K562 (cell line): ENCODE measurements at regions of chr1 and their contacts with region 1.

Region 1: GRCh38 chr1:158998781-158999161 is 10.9 kb upstream of the IFI16 start:
- DNase-seq: peak; percentile 47 to 73 (median 52)
- ATAC-seq: peak; percentile 83
- H3K4me3 ChIP-seq: no peak overlapping the region
- H3K27ac ChIP-seq: no peak overlapping the region
- H3K4me1 ChIP-seq: no peaks in the 10 kb centered on the region; a peak in 1 of 5 replicates
- H3K27me3 ChIP-seq: no peaks in the 10 kb centered on the region
- CTCF ChIP-seq: peak; percentile 57 to 91 (median 76); a peak in 5 of 6 replicates
- EP300 ChIP-seq: no peak
- POLR2A ChIP-seq: no peak
- RAD21 ChIP-seq: peak; percentile 90 to 94

Region 2: GRCh38 chr1:158203693-158204457 is 794.9 kb before region 1 on chr1:
- CTCF ChIA-PET with region 1: interaction called, 3 read pairs
- POLR2A ChIA-PET with region 1: no interaction called
- in situ Hi-C with region 1: no loop called
- intact Hi-C with region 1: loop called (anchors 5 kb)
- DNase-seq: peak; percentile 31 to 71 (median 40)
- ATAC-seq: peak; percentile 97
- H3K4me3 ChIP-seq: no peak overlapping the region
- H3K27ac ChIP-seq: no peak overlapping the region
- H3K4me1 ChIP-seq: no peaks in the 10 kb centered on the region; a peak in 1 of 5 replicates
- H3K27me3 ChIP-seq: no peaks in the 10 kb centered on the region
- CTCF ChIP-seq: peak; percentile 36 to 73 (median 70); a peak in 5 of 6 replicates
- EP300 ChIP-seq: no peak
- POLR2A ChIP-seq: no peak
- RAD21 ChIP-seq: peak; percentile 73 to 77

Region 3: GRCh38 chr1:158417586-158417985 is 581.2 kb before region 1 on chr1:
- CTCF ChIA-PET with region 1: no interaction called
- POLR2A ChIA-PET with region 1: no interaction called
- in situ Hi-C with region 1: no loop called
- intact Hi-C with region 1: no loop called
- DNase-seq: no peak
- ATAC-seq: no peak
- H3K4me3 ChIP-seq: no peak overlapping the region
- H3K27ac ChIP-seq: no peak overlapping the region
- H3K4me1 ChIP-seq: no peaks in the 10 kb centered on the region
- H3K27me3 ChIP-seq: no peaks in the 10 kb centered on the region
- CTCF ChIP-seq: no peak
- EP300 ChIP-seq: no peak
- POLR2A ChIP-seq: no peak
- RAD21 ChIP-seq: no peak

Region 4: DNA sequence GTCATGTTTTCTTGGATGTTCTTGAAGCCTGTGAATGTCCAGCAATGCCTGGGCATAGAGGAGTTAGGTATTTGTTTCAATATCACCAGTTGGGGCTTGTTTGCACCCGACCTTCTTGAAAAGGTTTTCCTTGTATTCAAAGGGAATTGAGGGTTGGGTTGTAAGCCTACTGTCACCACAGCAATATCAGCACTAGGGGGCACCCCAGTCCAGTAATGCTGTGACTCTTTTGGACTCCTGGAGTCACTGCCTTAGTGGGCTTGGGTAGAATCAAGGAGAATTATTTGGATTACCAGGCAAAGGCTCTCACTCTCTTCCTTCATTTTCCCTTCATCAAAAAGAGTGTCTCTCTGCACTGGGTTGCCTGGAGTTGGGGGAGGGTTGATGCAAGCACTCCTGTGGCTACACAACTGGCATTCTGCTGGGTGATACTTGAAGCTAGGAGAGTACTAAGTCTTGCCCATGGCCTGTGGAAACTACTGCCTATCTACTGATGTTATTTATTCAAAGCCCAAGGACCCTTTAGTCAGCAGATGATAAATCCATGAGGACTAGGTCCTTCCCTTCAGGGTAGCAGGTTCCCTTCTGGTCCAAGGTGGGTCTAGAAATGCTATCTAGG is 492.3 kb before region 1 on chr1:
- CTCF ChIA-PET with region 1: interaction called, 4 read pairs
- POLR2A ChIA-PET with region 1: no interaction called
- in situ Hi-C with region 1: no loop called
- intact Hi-C with region 1: loop called (anchors 2 kb)
- DNase-seq: peak; percentile 10 to 61 (median 20)
- ATAC-seq: peak; percentile 93
- H3K4me3 ChIP-seq: no peak overlapping the region
- H3K27ac ChIP-seq: no peak overlapping the region
- H3K4me1 ChIP-seq: no peaks in the 10 kb centered on the region
- H3K27me3 ChIP-seq: no peaks in the 10 kb centered on the region
- CTCF ChIP-seq: peak; percentile 63 to 70 (median 65)
- EP300 ChIP-seq: no peak
- POLR2A ChIP-seq: no peak
- RAD21 ChIP-seq: peak; percentile 62 to 70

Region 5: GRCh38 chr1:158654571-158654970 is 344.2 kb before region 1 on chr1:
- CTCF ChIA-PET with region 1: no interaction called
- POLR2A ChIA-PET with region 1: no interaction called
- in situ Hi-C with region 1: no loop called
- intact Hi-C with region 1: loop called (anchors 10 kb)
- DNase-seq: peak in 1 of 4 experiments; percentile 14
- ATAC-seq: peak; percentile 21; the same call in 1 of the 3 replicates
- H3K4me3 ChIP-seq: no peak overlapping the region
- H3K27ac ChIP-seq: no peak overlapping the region
- H3K4me1 ChIP-seq: no peaks in the 10 kb centered on the region
- H3K27me3 ChIP-seq: no peaks in the 10 kb centered on the region
- CTCF ChIP-seq: peak in 1 of 3 experiments; percentile 8; a peak in 1 of 6 replicates
- EP300 ChIP-seq: no peak
- POLR2A ChIP-seq: no peak
- RAD21 ChIP-seq: peak; percentile 30 to 47; a peak in 3 of 4 replicates

Region 6: GRCh38 chr1:158686111-158687009 is 312.4 kb before region 1 on chr1 and contains the start of gene SPTA1:
- CTCF ChIA-PET with region 1: no interaction called
- POLR2A ChIA-PET with region 1: no interaction called
- in situ Hi-C with region 1: no loop called
- intact Hi-C with region 1: loop called (anchors 10 kb)
- DNase-seq: peak; percentile 61 to 92 (median 70)
- ATAC-seq: peak; percentile 83
- H3K4me3 ChIP-seq: peak within 1 kb of the TSS; percentile 47
- H3K27ac ChIP-seq: peak within 1 kb of the TSS; percentile 82
- H3K4me1 ChIP-seq: peaks cover 0 to 18% of the 10 kb centered on the region in 2 experiments; a peak in 2 of 5 replicates
- H3K27me3 ChIP-seq: no peaks in the 10 kb centered on the region
- CTCF ChIP-seq: no peak
- EP300 ChIP-seq: peak; percentile 92
- POLR2A ChIP-seq: peak; percentile 77
- RAD21 ChIP-seq: 0 out of 4 replicates have a peak, but pooled peaks of 1 of the 2 experiments have one; percentile 4
- polyA plus RNA-seq, gene SPTA1: 11.0 to 21.6 TPM

Region 7: DNA sequence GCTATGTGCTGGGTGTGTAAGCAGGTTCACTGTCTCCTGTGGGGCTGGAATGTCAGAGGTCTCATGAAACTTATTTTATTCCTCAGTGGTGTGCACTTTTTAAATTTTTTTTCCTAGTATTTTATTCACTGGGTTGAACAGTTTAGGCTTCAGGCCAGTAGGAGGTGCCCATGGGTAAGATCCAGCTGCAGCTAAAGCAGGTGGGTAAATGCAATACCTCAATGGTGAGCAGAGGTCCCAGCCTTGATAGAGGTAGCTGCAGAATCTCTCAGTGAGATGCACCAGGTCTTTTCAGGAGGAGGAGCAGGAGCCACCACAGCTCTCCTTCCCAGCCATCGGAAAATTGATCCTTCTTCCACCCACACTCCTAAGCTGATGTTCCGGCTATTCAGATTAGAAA is 205.2 kb before region 1 on chr1:
- CTCF ChIA-PET with region 1: interaction called, 4 read pairs
- POLR2A ChIA-PET with region 1: no interaction called
- in situ Hi-C with region 1: loop called (anchors 10 kb)
- intact Hi-C with region 1: loop called (anchors 1 kb)
- DNase-seq: peak in 2 of 4 experiments; percentile 21 to 57
- ATAC-seq: peak; percentile 91
- H3K4me3 ChIP-seq: no peak overlapping the region
- H3K27ac ChIP-seq: no peak overlapping the region
- H3K4me1 ChIP-seq: no peaks in the 10 kb centered on the region; a peak in 1 of 5 replicates
- H3K27me3 ChIP-seq: no peaks in the 10 kb centered on the region
- CTCF ChIP-seq: peak; percentile 60 to 68 (median 67)
- EP300 ChIP-seq: no peak
- POLR2A ChIP-seq: no peak
- RAD21 ChIP-seq: peak; percentile 44 to 74

Region 8: GRCh38 chr1:158978730-158979129 is 20.0 kb before region 1 on chr1:
- CTCF ChIA-PET with region 1: no interaction called
- POLR2A ChIA-PET with region 1: no interaction called
- in situ Hi-C with region 1: no loop called
- intact Hi-C with region 1: no loop called
- DNase-seq: no peak
- ATAC-seq: no peak
- H3K4me3 ChIP-seq: no peak overlapping the region
- H3K27ac ChIP-seq: no peak overlapping the region
- H3K4me1 ChIP-seq: no peaks in the 10 kb centered on the region
- H3K27me3 ChIP-seq: no peaks in the 10 kb centered on the region
- CTCF ChIP-seq: no peak
- EP300 ChIP-seq: no peak
- POLR2A ChIP-seq: no peak
- RAD21 ChIP-seq: no peak

Region 9: DNA sequence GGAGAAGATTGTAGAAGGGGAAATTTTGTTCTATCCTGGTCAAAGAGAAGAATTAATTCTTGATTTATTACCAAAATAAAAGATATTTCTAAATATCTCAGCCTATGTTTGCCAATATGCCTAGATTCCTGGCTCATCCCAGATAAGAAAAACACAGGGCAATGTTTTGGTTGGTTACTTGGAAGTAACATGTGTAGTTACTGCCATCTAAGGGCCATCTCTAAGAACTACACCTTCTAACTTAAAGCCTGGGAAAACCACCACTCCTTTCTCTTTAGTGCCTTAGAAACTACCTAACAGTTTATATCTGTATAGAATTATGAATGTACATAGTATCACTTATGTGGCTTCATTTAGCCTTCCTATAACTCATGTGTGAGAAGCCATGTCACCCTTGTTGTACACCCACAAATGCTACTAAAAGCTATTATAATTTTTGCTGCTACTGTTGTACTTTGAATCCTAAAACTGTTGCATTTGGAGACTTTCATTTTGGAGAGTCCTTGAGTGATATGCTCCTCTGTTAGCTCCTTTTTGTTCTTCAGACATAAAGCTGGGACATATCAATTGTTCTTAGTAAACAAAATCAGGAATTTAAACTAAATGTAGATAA is 73.3 kb after region 1 on chr1:
- CTCF ChIA-PET with region 1: interaction called, 5 read pairs
- POLR2A ChIA-PET with region 1: no interaction called
- in situ Hi-C with region 1: no loop called
- intact Hi-C with region 1: loop called (anchors 2 kb)
- DNase-seq: peak; percentile 60 to 68 (median 62)
- ATAC-seq: peak; percentile 73
- H3K4me3 ChIP-seq: no peak overlapping the region
- H3K27ac ChIP-seq: no peak overlapping the region
- H3K4me1 ChIP-seq: peaks cover 0 to 9% of the 10 kb centered on the region in 2 experiments; a peak in 3 of 5 replicates
- H3K27me3 ChIP-seq: no peaks in the 10 kb centered on the region; a peak in 1 of 5 replicates
- CTCF ChIP-seq: peak; percentile 48 to 79 (median 66); a peak in 5 of 6 replicates
- EP300 ChIP-seq: no peak
- POLR2A ChIP-seq: no peak
- RAD21 ChIP-seq: peak; percentile 87 to 89